ENCODE measurements at regions of chr11 and their contacts with region 1.

Region 1: GRCh38 chr11:66438504-66439466 is at the start of gene MRPL11:
- DNase-seq: peak; percentile 95
- H3K4me3 Mint-ChIP-seq: peak within 1 kb of the TSS; percentile 89
- H3K27ac Mint-ChIP-seq: peak within 1 kb of the TSS; percentile 99
- H3K4me1 Mint-ChIP-seq: peaks cover 12% of the 10 kb centered on the region
- H3K27me3 Mint-ChIP-seq: no peaks in the 10 kb centered on the region
- total RNA-seq, gene MRPL11: 143 to 144 TPM

Region 2: GRCh38 chr11:66311965-66312548 is 126.7 kb before region 1 on chr11:
- CTCF ChIA-PET with region 1: interaction called, 3 read pairs
- intact Hi-C with region 1: loop called (anchors 1 kb)
- DNase-seq: peak; percentile 96
- H3K4me3 Mint-ChIP-seq: peak overlapping the region; percentile 92
- H3K27ac Mint-ChIP-seq: peak overlapping the region; percentile 93
- H3K4me1 Mint-ChIP-seq: peaks cover 33% of the 10 kb centered on the region
- H3K27me3 Mint-ChIP-seq: no peaks in the 10 kb centered on the region

Region 3: GRCh38 chr11:66408488-66409214 is 30.1 kb before region 1 on chr11:
- CTCF ChIA-PET with region 1: interaction called, 5 read pairs
- intact Hi-C with region 1: loop called (anchors 1 kb)
- DNase-seq: peak; percentile 93
- H3K4me3 Mint-ChIP-seq: peak overlapping the region; percentile 68
- H3K27ac Mint-ChIP-seq: no peak overlapping the region
- H3K4me1 Mint-ChIP-seq: peaks cover 4% of the 10 kb centered on the region
- H3K27me3 Mint-ChIP-seq: peaks cover 9% of the 10 kb centered on the region

Region 4: GRCh38 chr11:66466225-66467027 is 27.6 kb after region 1 on chr11 and contains the start of gene PELI3:
- CTCF ChIA-PET with region 1: interaction called, 6 read pairs
- intact Hi-C with region 1: loop called (anchors 1 kb)
- DNase-seq: peak; percentile 96
- H3K4me3 Mint-ChIP-seq: peak within 1 kb of the TSS; percentile 85
- H3K27ac Mint-ChIP-seq: peak within 1 kb of the TSS; percentile 75
- H3K4me1 Mint-ChIP-seq: peaks cover 33% of the 10 kb centered on the region
- H3K27me3 Mint-ChIP-seq: no peaks in the 10 kb centered on the region
- total RNA-seq, gene PELI3: 2.3 to 2.4 TPM

Region 5: DNA sequence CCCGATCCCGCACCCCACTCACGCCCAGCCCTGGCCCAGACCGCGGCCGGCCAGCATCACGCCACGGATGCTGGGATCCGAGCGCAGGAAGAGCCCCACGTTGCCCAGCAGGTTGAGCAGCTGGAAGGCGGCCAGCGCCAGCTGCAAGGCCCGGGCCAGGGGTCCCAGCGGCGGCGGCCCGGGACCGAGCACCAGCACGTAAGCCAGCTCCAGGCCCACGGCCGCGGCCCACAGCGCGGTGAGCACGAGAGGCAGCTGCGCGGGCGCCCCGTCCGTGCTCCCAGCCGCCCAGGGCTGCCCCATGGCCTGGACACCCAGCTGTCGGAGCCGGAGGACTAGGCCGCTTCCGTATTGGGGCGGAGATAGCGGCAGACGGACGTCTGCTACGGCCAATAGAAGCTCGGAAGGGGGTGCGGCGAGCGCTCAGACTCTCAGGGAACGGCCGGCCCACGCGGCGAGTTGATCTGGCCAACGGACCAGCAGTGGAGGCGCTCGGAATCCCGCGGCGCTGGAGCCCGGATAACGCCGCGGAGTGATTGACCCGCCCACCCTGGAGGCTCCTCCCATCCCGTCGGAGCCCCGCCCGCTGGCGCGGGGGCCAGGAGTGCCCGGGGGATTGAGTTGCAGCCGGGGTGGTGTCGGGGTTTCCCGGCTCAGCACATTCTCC is 107.0 kb after region 1 on chr11 and contains the start of gene ZDHHC24:
- CTCF ChIA-PET with region 1: interaction called, 3 read pairs
- intact Hi-C with region 1: loop called (anchors 1 kb)
- DNase-seq: peak; percentile 91
- H3K4me3 Mint-ChIP-seq: peak within 1 kb of the TSS; percentile 75
- H3K27ac Mint-ChIP-seq: peak within 1 kb of the TSS; percentile 30
- H3K4me1 Mint-ChIP-seq: peaks cover 18% of the 10 kb centered on the region
- H3K27me3 Mint-ChIP-seq: no peaks in the 10 kb centered on the region
- total RNA-seq, gene ZDHHC24: 11.5 to 13.4 TPM